Activated CD8-positive, alpha-beta memory T cell treated with anti-CD3 and anti-CD28 coated beads, Interleukin-2, amount 10 ng/mL, durations not matched to agents 7 days and 5 days (primary cell): ENCODE measurements at regions of chr2 and their contacts with region 1.

Region 1: DNA sequence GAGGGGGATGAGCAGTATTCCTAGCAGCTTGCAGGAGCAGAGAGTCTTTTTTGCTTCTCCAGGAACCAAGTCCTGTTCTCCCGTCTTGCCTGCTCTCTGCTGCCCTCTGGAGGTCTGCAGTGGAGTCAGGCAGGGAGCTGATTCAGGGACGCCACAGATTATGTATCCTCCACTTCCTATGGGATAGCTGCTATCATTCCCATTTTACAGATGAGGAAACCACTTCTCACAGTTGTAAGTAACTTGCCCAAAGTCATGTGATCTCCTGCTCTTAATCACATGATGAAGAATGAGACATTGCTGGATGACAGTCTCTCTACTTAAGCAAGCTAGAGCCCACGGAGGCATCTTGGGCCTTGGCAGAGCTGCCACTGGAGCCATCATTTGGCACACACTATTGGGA is 8.3 kb downstream of the SLC4A5 start:
- DNase-seq: peak; percentile 81
- ATAC-seq: peak; percentile 83
- H3K4me3 Mint-ChIP-seq: no peak overlapping the region
- H3K27ac Mint-ChIP-seq: no peak overlapping the region
- H3K4me1 Mint-ChIP-seq: no peaks in the 10 kb centered on the region
- H3K27me3 Mint-ChIP-seq: no peaks in the 10 kb centered on the region

Region 2: DNA sequence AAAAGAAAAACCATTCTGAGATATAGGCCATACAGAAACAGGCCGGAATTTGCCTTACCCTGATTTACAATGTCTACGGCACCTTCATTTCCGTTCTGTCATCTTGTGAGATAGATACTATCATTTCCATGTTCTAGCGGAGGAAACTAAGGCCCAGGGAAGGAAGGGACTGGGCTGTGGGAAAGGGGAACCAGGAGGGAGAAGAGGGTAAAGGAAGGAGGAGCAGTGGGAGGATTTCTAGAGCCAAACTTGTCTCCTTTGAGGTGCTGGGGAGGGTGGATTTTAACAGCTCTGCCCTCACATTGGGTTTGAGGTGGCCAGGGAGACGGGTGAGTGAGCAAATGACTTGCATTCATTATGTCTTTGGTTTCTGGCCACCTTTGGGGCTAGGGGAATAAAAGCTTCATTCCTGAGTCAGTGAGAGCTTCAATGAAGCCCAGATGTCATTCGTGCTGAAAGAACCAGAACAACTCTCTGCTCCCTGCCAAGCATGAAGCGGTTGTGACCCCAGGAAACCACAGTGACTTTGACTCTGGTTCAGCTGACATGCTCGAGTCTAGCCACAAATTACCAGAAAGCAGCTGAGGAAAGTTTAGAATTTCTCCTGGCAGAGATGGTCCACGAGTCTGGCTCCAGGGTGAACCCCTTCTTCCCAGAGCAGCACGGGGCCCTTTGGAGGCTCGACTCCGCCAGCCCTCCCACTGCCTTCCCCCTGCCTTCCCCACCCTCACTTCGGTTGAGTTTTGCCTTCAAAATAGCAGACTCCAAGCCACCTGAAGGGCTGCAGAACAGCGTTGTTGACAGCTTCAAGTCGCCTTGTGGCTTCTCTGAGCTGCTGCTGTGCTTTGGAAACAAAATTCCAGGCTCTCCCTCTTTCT is 438.3 kb before region 1 on chr2:
- CTCF ChIA-PET with region 1: no interaction called
- DNase-seq: peak; percentile 85
- ATAC-seq: peak; percentile 87
- H3K4me3 Mint-ChIP-seq: peak overlapping the region; percentile 6
- H3K27ac Mint-ChIP-seq: peak overlapping the region; percentile 82
- H3K4me1 Mint-ChIP-seq: peaks cover 40% of the 10 kb centered on the region
- H3K27me3 Mint-ChIP-seq: no peaks in the 10 kb centered on the region

Region 3: DNA sequence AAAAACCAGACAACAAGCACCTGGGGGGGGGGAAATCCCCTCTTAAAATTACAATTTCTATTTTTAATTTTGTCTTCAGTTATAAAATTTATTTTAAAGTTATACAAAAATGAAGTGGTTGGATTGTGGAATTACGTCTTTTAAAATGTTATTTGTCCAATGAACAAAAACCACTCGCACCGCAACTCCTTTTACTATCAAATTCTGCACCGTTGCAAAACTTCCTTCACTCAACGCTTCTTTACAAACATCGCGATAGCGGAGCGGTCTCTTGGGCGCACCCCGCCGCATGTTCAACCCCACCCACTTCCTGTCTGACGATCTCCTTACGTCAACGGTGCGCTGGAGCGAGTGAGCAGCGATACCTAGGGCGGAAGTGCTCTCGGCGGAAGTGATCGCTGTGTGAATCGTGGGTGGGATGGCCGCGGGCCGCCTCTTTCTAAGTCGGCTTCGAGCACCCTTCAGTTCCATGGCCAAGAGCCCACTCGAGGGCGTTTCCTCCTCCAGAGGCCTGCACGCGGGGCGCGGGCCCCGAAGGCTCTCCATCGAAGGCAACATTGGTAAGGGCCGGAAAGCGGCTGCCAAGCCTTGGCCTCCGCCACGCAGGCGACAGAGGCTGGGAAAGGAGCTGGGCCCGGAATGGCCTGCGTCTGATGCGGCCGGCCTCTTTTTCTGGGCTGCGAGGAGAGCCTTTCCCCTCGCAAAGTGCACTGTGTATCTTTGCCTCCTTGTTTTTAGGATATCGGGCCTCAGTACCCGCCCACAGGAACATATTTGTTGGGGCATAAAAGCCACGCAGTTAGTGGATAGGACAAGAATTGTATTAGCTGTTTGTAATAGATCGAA is 408.2 kb before region 1 on chr2 and contains the start of gene DGUOK:
- CTCF ChIA-PET with region 1: no interaction called
- DNase-seq: peak; percentile 99
- ATAC-seq: peak; percentile 99
- H3K4me3 Mint-ChIP-seq: peak within 1 kb of the TSS; percentile 87
- H3K27ac Mint-ChIP-seq: peak within 1 kb of the TSS; percentile 94
- H3K4me1 Mint-ChIP-seq: peaks cover 56% of the 10 kb centered on the region
- H3K27me3 Mint-ChIP-seq: no peaks in the 10 kb centered on the region
- total RNA-seq, gene DGUOK: 65.9 to 75.4 TPM

Region 4: GRCh38 chr2:74238879-74239278 is 96.1 kb before region 1 on chr2:
- CTCF ChIA-PET with region 1: interaction called, 12 read pairs
- DNase-seq: no peak
- ATAC-seq: no peak
- H3K4me3 Mint-ChIP-seq: no peak overlapping the region
- H3K27ac Mint-ChIP-seq: no peak overlapping the region
- H3K4me1 Mint-ChIP-seq: peaks cover 2% of the 10 kb centered on the region
- H3K27me3 Mint-ChIP-seq: no peaks in the 10 kb centered on the region

Region 5: DNA sequence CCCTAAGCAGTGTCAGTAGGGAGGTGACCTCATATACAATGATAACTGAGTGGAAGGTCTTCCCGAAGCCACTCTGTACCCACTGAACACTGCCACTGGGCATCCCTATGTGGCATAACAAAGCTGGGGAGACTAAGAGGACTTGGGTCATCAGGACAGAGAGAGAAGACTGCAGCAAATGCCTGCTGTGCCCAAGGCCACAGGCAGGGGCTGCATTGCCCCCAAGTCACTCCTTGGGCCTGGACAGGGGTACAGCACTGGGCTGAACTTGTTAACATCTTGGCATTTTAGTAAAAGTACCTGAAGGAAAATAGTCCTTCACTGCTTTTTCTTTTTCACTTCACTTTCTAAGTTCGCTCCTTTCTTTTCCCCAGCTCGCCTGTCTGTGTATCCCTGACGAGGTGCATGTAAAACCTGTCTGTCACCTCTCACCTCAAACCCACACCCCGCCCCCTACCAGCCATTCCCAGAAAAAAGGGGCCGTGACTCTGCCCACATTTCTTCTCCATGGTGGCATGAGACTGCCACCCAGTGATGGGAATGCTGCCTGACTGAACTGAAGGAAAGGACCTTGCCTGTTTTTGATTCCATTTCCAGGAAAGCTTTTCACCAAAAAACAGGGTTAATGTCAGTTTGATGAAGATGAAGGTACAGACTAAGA is 73.6 kb before region 1 on chr2:
- CTCF ChIA-PET with region 1: interaction called, 17 read pairs
- DNase-seq: no peak
- ATAC-seq: no peak
- H3K4me3 Mint-ChIP-seq: no peak overlapping the region
- H3K27ac Mint-ChIP-seq: no peak overlapping the region
- H3K4me1 Mint-ChIP-seq: peaks cover 6% of the 10 kb centered on the region
- H3K27me3 Mint-ChIP-seq: no peaks in the 10 kb centered on the region

Region 6: DNA sequence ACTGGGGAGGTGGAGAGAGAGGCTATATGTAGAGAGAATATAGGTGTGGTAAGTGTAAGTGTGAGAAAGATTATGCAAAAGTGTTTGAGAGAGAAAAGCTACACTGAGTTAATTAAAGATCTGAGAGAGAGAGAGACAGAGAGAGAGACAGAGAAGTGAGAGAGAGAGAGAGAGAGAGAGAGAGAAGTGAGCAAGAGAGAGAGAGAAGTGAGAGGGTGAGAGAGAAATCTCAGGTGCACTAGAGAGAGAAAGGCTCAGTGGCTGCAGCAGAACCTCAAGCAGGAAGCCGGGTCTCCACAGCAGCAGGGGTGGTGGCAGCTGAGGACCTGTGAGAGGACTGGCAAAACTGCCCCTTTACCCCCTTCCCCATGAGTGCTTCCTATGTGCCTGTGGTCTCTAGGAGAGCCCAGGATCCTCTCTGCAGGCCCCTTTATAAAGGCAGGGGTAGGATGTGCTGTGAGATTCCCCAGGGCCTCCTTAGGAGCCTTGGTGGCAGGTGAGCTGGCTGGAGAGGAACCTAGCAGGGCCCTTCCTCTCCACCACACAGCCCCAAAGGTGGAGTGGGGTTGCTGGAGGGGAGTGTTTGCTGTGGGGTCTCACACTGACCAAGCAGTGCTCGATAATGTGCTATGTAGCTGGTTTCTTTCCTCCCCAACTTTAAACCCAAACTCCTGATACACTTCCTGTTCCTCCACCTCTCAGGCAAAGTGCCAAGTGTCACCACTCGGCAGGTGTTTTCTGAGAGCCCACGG is 44.3 kb before region 1 on chr2:
- CTCF ChIA-PET with region 1: interaction called, 13 read pairs
- DNase-seq: peak; percentile 70
- ATAC-seq: peak; percentile 82
- H3K4me3 Mint-ChIP-seq: no peak overlapping the region
- H3K27ac Mint-ChIP-seq: peak overlapping the region; percentile 72
- H3K4me1 Mint-ChIP-seq: peaks cover 16% of the 10 kb centered on the region
- H3K27me3 Mint-ChIP-seq: no peaks in the 10 kb centered on the region

Region 7: GRCh38 chr2:74357627-74358026 is 22.7 kb after region 1 on chr2:
- CTCF ChIA-PET with region 1: interaction called, 42 read pairs
- DNase-seq: no peak
- ATAC-seq: no peak
- H3K4me3 Mint-ChIP-seq: no peak overlapping the region
- H3K27ac Mint-ChIP-seq: no peak overlapping the region
- H3K4me1 Mint-ChIP-seq: no peaks in the 10 kb centered on the region
- H3K27me3 Mint-ChIP-seq: no peaks in the 10 kb centered on the region